CD4-positive, alpha-beta memory T cell (primary cell): ENCODE measurements at regions of chr6 and their contacts with region 1.

Region 1: GRCh38 chr6:30483677-30484279 is 5.5 kb upstream of the HLA-E start:
- DNase-seq: peak in 4 of 5 donors; percentile 44 to 57 (median 48)
- H3K4me3 ChIP-seq: no peak overlapping the region
- H3K4me3 Mint-ChIP-seq: no peak overlapping the region
- H3K27ac ChIP-seq: no peak overlapping the region
- H3K27ac Mint-ChIP-seq: peak overlapping the region in 2 of 7 donors; percentile 8 to 29
- H3K4me1 ChIP-seq: peaks cover 24% of the 10 kb centered on the region
- H3K4me1 Mint-ChIP-seq: peaks cover 27 to 42% (median 31%) of the 10 kb centered on the region in 4 donors
- H3K27me3 ChIP-seq: peaks cover 22% of the 10 kb centered on the region
- H3K27me3 Mint-ChIP-seq: peaks cover 18 to 22% of the 10 kb centered on the region in 2 donors

Region 2: DNA sequence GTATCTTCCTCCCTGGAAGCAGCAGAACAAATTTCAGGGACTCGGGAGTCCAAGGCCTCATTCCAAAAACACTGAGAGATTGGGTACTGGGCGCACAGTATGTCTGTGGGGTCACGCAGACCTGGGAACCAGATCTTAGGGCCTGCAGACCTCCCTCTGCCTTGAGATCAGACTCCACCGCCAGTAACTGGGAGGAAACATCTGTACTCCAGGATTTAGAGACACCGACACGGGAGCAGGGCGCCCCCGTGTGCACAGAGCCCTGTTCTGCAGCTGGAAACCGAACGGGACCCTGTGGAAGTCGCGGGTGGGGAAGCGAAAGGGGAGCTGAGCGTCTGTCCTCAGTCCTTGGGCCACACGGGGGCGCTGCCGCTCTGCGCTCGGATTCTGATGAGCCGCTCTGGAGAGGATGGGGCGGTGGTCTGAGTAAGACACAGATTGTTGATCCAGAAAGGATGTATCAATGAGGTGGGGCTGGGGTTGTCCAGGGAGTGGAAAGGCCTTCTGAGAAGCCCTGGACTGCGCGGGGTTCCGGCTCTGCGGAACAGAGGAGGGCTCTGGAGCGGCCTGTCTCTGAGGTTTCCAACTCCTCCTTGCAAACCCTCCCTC is 30.2 kb before region 1 on chr6:
- CTCF ChIA-PET with region 1: interaction called, 8 read pairs
- POLR2A ChIA-PET with region 1: interaction called, 7 read pairs
- intact Hi-C with region 1: loop called (anchors 1 kb)
- DNase-seq: peak; percentile 77 to 84 (median 81)
- H3K4me3 ChIP-seq: peak overlapping the region in 1 of 2 donors; percentile 28
- H3K4me3 Mint-ChIP-seq: peak overlapping the region; percentile 52 to 77 (median 62)
- H3K27ac ChIP-seq: no peak overlapping the region
- H3K27ac Mint-ChIP-seq: peak overlapping the region in 1 of 7 donors; percentile 17
- H3K4me1 ChIP-seq: peaks cover 47% of the 10 kb centered on the region
- H3K4me1 Mint-ChIP-seq: peaks cover 31 to 54% (median 43%) of the 10 kb centered on the region in 4 donors
- H3K27me3 ChIP-seq: peaks cover 80% of the 10 kb centered on the region
- H3K27me3 Mint-ChIP-seq: peaks cover 50 to 56% of the 10 kb centered on the region in 2 donors

Region 3: GRCh38 chr6:30500421-30501355 is 16.9 kb after region 1 on chr6:
- CTCF ChIA-PET with region 1: interaction called, 15 read pairs
- POLR2A ChIA-PET with region 1: interaction called, 743 read pairs
- intact Hi-C with region 1: no loop called
- DNase-seq: no peak
- H3K4me3 ChIP-seq: peak overlapping the region in 1 of 2 donors; percentile 6
- H3K4me3 Mint-ChIP-seq: peak overlapping the region; percentile 70 to 85 (median 80)
- H3K27ac ChIP-seq: no peak overlapping the region
- H3K27ac Mint-ChIP-seq: peak overlapping the region; percentile 25 to 89 (median 73)
- H3K4me1 ChIP-seq: peaks cover 34% of the 10 kb centered on the region
- H3K4me1 Mint-ChIP-seq: peaks cover 24 to 42% (median 32%) of the 10 kb centered on the region in 4 donors
- H3K27me3 ChIP-seq: no peaks in the 10 kb centered on the region
- H3K27me3 Mint-ChIP-seq: no peaks in the 10 kb centered on the region

Region 4: DNA sequence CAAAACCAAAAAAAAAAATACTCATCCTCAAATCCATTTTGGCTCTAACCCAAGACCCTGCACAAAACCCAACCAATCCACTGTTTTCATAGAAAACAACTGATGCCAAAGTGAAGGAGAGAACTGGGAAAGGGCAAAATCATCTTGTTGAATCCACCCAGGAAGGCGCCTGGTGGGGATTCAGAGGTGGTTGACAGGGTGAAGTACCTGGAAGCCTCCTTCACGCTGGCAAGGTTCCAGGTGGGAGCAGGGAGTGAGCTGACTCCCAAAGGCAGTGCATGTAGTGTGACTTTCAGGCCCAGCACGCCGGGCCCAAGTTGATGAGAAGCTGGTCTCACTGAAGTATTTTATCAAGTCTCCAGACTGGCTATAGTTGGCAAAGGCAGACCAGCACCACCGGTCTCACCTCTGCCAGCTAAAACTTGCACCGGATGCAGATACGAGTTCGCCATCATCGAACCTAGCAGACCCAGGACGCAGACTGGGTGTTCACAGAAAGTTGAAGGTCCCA is 116.7 kb after region 1 on chr6:
- CTCF ChIA-PET with region 1: interaction called, 233 read pairs
- POLR2A ChIA-PET with region 1: interaction called, 19 read pairs
- intact Hi-C with region 1: loop called (anchors 1 kb)
- DNase-seq: no peak
- H3K4me3 ChIP-seq: no peak overlapping the region
- H3K4me3 Mint-ChIP-seq: no peak overlapping the region
- H3K27ac ChIP-seq: no peak overlapping the region
- H3K27ac Mint-ChIP-seq: peak overlapping the region in 2 of 7 donors; percentile 41 to 64
- H3K4me1 ChIP-seq: no peaks in the 10 kb centered on the region
- H3K4me1 Mint-ChIP-seq: peaks cover 7 to 26% (median 17%) of the 10 kb centered on the region in 4 donors
- H3K27me3 ChIP-seq: no peaks in the 10 kb centered on the region
- H3K27me3 Mint-ChIP-seq: no peaks in the 10 kb centered on the region

Region 5: DNA sequence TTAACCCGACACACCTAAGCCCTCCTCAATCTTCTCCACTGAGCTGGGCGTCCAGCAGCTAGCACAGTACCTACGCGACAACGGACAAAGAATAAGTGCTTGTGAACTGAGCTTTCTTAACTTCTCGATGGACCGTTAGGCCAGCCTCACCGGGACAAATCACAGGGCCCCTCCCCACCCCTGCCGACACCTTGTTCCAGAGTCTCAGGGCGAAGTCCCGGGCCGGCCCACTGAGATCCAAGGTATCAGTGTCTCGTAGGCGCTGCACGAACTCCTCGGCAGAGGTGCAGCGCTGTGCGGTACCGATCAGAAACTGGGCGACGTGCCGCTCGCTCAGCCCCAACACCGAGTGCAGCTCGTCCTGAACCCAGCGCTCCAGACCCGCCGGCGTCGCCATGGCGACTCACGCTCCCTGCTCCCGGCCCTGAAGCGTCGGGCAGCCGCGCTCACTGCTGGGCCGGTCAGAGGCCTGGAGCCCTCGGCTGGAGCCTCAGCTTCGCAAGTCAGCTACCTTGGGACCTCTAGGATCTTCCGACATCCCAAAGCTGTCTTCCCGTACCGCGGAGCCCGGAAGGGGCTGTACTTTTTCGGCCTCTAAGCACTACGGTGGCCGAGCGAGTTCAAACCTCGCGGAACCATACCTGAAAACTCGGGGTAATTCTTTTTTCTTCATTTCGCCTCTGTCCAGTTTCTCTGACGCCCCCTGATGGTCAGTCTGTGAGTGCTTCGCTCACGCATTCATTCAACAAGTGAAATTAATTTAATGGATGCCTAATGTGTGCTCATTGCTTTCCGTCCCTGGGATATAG is 188.9 kb after region 1 on chr6 and contains the start of gene DHX16:
- CTCF ChIA-PET with region 1: interaction called, 71 read pairs
- POLR2A ChIA-PET with region 1: interaction called, 4 read pairs
- intact Hi-C with region 1: loop called (anchors 1 kb)
- DNase-seq: peak; percentile 84 to 89 (median 87)
- H3K4me3 ChIP-seq: peak within 1 kb of the TSS; percentile 89 to 95
- H3K4me3 Mint-ChIP-seq: peak within 1 kb of the TSS; percentile 80 to 94 (median 90)
- H3K27ac ChIP-seq: peak within 1 kb of the TSS; percentile 77
- H3K27ac Mint-ChIP-seq: peak within 1 kb of the TSS; percentile 69 to 97 (median 94)
- H3K4me1 ChIP-seq: peaks cover 20% of the 10 kb centered on the region
- H3K4me1 Mint-ChIP-seq: peaks cover 19 to 51% (median 35%) of the 10 kb centered on the region in 4 donors
- H3K27me3 ChIP-seq: no peaks in the 10 kb centered on the region
- H3K27me3 Mint-ChIP-seq: no peaks in the 10 kb centered on the region
- total RNA-seq, gene DHX16: 53.4 to 54.6 TPM

Region 6: GRCh38 chr6:30877419-30878371 is 393.9 kb after region 1 on chr6:
- CTCF ChIA-PET with region 1: no interaction called
- POLR2A ChIA-PET with region 1: no interaction called
- intact Hi-C with region 1: loop called (anchors 1 kb)
- DNase-seq: peak; percentile 62 to 71 (median 68)
- H3K4me3 ChIP-seq: peak overlapping the region; percentile 40 to 43
- H3K4me3 Mint-ChIP-seq: peak overlapping the region; percentile 61 to 91 (median 82)
- H3K27ac ChIP-seq: no peak overlapping the region
- H3K27ac Mint-ChIP-seq: peak overlapping the region in 6 of 7 donors; percentile 21 to 91 (median 72)
- H3K4me1 ChIP-seq: peaks cover 10% of the 10 kb centered on the region
- H3K4me1 Mint-ChIP-seq: peaks cover 7 to 27% (median 11%) of the 10 kb centered on the region in 4 donors
- H3K27me3 ChIP-seq: no peaks in the 10 kb centered on the region
- H3K27me3 Mint-ChIP-seq: no peaks in the 10 kb centered on the region